Thyroid gland (tissue), 4 donors: ENCODE measurements at regions of chr20 and their contacts with region 1.

Region 1: GRCh38 chr20:3115190-3116107 is 30.9 kb upstream of the AVP start:
- DNase-seq: peak; percentile 41 to 46
- H3K4me3 ChIP-seq: no peak overlapping the region
- H3K27ac ChIP-seq: no peak overlapping the region
- H3K4me1 ChIP-seq: peaks cover 3 to 5% of the 10 kb centered on the region in 2 donors
- H3K27me3 ChIP-seq: no peaks in the 10 kb centered on the region
- CTCF ChIP-seq: peak; percentile 46 to 86 (median 70)
- POLR2A ChIP-seq: no peak

Region 2: DNA sequence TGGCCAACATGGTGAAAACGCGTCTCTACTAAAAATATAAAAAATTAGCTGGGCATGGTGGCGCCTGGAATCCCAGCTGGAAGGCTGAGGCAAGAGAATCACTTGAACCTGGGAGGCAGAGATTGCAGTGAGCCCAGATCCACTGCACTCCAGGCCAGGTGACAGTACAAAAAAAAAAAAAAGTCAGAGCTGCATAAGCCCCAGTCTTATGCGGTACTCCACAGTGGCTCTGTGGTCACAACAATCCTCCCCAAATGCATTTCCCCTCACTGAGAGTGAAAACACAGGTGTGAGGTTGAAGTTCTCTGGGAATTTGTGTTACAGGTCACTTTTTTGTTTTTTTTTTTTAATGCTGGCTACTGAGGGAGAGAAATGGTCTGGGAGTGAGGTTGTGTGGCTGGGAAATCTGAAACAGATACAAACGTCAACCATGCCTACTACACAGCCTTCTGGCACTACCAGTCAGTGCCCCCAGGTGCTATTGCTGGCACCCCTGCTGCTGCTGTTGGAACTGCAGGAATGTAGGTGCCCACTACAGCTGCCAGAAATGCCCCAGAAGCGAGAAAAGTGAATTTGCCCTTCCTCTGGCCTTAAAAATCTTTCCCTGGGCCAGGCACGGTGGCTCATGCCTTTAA is 63.9 kb before region 1 on chr20:
- intact Hi-C with region 1: loop called (anchors 10 kb)
- DNase-seq: no peak
- H3K4me3 ChIP-seq: no peak overlapping the region
- H3K27ac ChIP-seq: no peak overlapping the region
- H3K4me1 ChIP-seq: peaks cover 9 to 11% of the 10 kb centered on the region in 2 donors
- H3K27me3 ChIP-seq: no peaks in the 10 kb centered on the region
- CTCF ChIP-seq: no peak
- POLR2A ChIP-seq: no peak

Region 3: GRCh38 chr20:3312940-3313682 is 197.7 kb after region 1 on chr20:
- intact Hi-C with region 1: loop called (anchors 10 kb)
- DNase-seq: peak; percentile 65 to 66
- H3K4me3 ChIP-seq: no peak overlapping the region
- H3K27ac ChIP-seq: peak overlapping the region; percentile 90 to 92 (median 92)
- H3K4me1 ChIP-seq: peaks cover 48 to 59% of the 10 kb centered on the region in 2 donors
- H3K27me3 ChIP-seq: no peaks in the 10 kb centered on the region
- CTCF ChIP-seq: no peak
- POLR2A ChIP-seq: peak in 1 of 2 donors; percentile 31